Transverse colon (tissue), 4 donors: ENCODE measurements at regions of chr12 and their contacts with region 1.

Region 1: DNA sequence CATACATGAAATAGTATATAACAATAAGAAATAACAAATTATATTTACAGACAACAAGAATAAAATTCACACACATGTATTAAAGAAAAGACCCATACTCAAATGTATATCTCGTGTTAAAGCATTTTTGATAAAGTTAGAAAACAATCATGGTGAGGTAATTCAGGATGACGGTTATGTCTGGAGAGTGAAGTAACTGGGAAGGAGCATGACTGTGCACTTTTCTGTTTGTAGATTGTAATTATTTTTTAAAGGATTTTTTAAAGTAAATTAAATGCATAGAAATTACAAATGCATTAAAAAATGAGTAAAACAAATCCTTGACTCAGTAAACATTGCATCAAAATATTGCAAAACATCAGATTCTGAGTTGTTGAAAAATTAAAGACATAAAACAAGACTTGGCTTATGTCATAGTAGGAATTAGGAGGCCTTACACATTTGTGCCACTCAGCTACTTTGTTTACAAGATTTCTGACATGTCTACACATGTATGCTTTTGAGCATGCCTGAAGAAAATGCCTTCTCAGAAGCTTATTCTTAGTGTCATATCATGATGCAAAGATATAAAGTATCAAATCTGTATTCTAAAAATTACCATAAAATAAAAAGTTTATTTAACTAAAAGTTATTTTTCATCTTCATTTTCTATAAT is 1325.1 kb downstream of the SLC16A7 start:
- DNase-seq: no peak
- H3K4me3 ChIP-seq: no peak overlapping the region
- H3K27ac ChIP-seq: no peak overlapping the region
- H3K4me1 ChIP-seq: no peaks in the 10 kb centered on the region
- H3K27me3 ChIP-seq: no peaks in the 10 kb centered on the region
- CTCF ChIP-seq: no peak
- EP300 ChIP-seq: no peak
- POLR2A ChIP-seq: no peak

Region 2: DNA sequence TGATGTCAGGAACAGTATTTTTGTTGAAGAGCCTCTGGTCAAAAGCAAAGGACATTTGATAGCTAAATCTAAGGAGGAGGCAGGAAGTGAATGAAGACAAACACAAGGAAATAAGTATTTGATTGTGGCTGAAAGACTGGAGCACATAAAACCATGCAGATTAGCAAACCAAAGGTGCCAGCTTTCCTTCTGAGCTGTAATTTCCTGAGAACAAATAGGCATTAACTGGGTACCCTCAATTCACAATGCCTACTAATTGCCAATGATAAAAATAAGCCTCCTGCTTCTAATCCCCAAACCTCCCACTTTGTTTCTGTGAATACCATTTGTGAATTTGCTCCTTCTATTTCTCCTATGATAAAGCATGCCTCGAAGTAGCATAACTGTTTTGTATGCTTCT is 59.6 kb after region 1 on chr12:
- in situ Hi-C with region 1: loop called in 1 of 4 experiments (anchors 10 kb)
- intact Hi-C with region 1: no loop called
- DNase-seq: no peak
- H3K4me3 ChIP-seq: no peak overlapping the region
- H3K27ac ChIP-seq: no peak overlapping the region
- H3K4me1 ChIP-seq: no peaks in the 10 kb centered on the region
- H3K27me3 ChIP-seq: no peaks in the 10 kb centered on the region
- CTCF ChIP-seq: no peak
- EP300 ChIP-seq: no peak
- POLR2A ChIP-seq: no peak

Region 3: GRCh38 chr12:61701471-61701870 is 780.5 kb after region 1 on chr12:
- in situ Hi-C with region 1: no loop called
- intact Hi-C with region 1: no loop called
- DNase-seq: no peak
- H3K4me3 ChIP-seq: no peak overlapping the region
- H3K27ac ChIP-seq: no peak overlapping the region
- H3K4me1 ChIP-seq: no peaks in the 10 kb centered on the region
- H3K27me3 ChIP-seq: no peaks in the 10 kb centered on the region
- CTCF ChIP-seq: no peak
- EP300 ChIP-seq: no peak
- POLR2A ChIP-seq: no peak